A549 (cell line): ENCODE measurements at regions of chr1 and their contacts with region 1.

Region 1: DNA sequence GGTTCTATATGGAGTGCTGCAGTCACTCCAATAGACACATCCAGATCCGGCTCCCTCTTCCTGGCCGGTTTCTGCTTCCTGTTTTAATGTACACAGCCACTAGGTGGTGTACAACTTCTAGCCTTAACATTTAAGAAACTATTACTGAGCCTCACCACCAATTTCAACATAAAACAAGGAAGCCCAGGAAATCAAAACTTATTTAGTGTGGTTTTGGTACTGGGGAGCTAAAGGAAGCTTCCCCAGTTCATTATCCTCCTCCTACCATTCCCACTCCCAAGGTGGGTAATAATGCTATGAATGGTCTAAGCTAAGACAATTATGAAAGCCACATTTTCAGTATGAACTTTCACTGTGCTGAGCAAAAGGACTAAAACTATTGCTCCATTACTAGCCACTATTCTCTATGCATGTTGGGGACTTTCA is 25.5 kb upstream of the MTMR11 start:
- DNase-seq: peak; percentile 51 to 79
- ATAC-seq: peak; percentile 94
- H3K4me3 ChIP-seq: no peak overlapping the region
- H3K27ac ChIP-seq: no peak overlapping the region
- H3K4me1 ChIP-seq: no peaks in the 10 kb centered on the region
- CTCF ChIP-seq: peak; percentile 92
- EP300 ChIP-seq: no peak
- POLR2A ChIP-seq: no peak
- RAD21 ChIP-seq: peak; percentile 80 to 82

Region 2: GRCh38 chr1:149972547-149972946 is 10.4 kb after region 1 on chr1:
- CTCF ChIA-PET with region 1: interaction called, 14 read pairs
- POLR2A ChIA-PET with region 1: no interaction called
- DNase-seq: no peak
- ATAC-seq: no peak
- H3K4me3 ChIP-seq: no peak overlapping the region
- H3K27ac ChIP-seq: no peak overlapping the region
- H3K4me1 ChIP-seq: no peaks in the 10 kb centered on the region
- CTCF ChIP-seq: no peak
- EP300 ChIP-seq: no peak
- POLR2A ChIP-seq: no peak
- RAD21 ChIP-seq: no peak

Region 3: DNA sequence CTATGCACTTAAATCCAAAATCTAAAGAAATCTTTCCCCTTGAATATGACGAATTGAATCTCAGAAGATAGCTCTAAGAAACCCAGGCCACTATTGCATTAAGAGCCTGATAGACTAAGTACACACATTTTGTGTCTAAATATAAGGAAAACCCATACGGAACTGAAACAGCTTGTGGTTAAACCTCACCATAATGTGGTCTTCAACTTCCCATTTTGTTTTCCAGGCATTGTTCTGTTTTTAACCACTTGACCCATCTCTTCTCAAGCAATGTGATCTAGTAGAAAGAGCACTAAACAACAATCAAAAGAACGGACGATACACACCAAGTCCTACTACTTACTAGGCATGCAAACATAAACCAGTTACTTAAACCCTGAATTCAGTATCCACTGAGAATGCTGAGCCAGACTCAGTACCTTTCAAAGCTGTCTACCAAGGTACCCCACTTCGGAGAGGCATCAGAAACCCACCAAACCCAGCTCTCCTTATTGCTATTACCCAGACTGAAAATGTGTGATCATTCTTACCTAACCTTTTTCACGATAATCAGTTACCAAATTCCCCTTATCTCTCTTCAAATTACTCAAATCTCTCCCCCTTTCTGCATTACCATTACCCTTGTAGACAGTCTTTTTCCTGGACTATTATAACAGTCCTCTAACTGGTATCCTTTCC is 35.6 kb after region 1 on chr1:
- CTCF ChIA-PET with region 1: interaction called, 22 read pairs
- POLR2A ChIA-PET with region 1: no interaction called
- DNase-seq: no peak
- ATAC-seq: no peak
- H3K4me3 ChIP-seq: no peak overlapping the region
- H3K27ac ChIP-seq: no peak overlapping the region
- H3K4me1 ChIP-seq: peaks cover 21% of the 10 kb centered on the region
- CTCF ChIP-seq: no peak
- EP300 ChIP-seq: no peak
- POLR2A ChIP-seq: no peak
- RAD21 ChIP-seq: no peak

Region 4: DNA sequence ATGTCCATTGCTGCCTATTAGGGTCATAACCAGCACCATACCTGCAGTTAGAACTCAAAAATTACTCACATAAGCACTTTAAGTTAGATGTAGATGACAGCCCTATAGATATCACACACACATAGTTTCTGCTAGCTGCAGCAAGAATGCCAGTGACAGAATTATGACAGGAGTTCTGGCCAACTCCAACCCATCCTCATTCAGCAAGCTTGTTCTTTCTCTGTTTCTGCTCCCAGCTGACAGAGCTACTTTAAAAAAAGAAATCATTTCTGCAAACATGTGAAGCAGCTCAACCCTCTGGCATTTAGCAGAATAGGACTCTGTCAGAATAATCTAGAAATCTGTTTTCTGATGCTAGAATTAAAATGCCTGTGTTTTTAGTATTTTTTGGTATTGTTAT is 72.2 kb after region 1 on chr1:
- CTCF ChIA-PET with region 1: interaction called, 12 read pairs
- POLR2A ChIA-PET with region 1: no interaction called
- DNase-seq: no peak
- ATAC-seq: no peak
- H3K4me3 ChIP-seq: no peak overlapping the region
- H3K27ac ChIP-seq: no peak overlapping the region
- H3K4me1 ChIP-seq: no peaks in the 10 kb centered on the region
- CTCF ChIP-seq: no peak
- EP300 ChIP-seq: no peak
- POLR2A ChIP-seq: no peak
- RAD21 ChIP-seq: no peak

Region 5: GRCh38 chr1:150162862-150163706 is 200.9 kb after region 1 on chr1:
- CTCF ChIA-PET with region 1: interaction called, 11 read pairs
- POLR2A ChIA-PET with region 1: no interaction called
- DNase-seq: peak in 1 of 2 experiments; percentile 49
- ATAC-seq: peak; percentile 18 to 58; a peak in 3 of 6 replicates
- H3K4me3 ChIP-seq: no peak overlapping the region
- H3K27ac ChIP-seq: no peak overlapping the region
- H3K4me1 ChIP-seq: no peaks in the 10 kb centered on the region
- CTCF ChIP-seq: no peak
- EP300 ChIP-seq: no peak
- POLR2A ChIP-seq: no peak
- RAD21 ChIP-seq: no peak